BJ (cell line): ENCODE measurements at regions of chr1 and their contacts with region 1.

Region 1: GRCh38 chr1:169915150-169915549 is 21.5 kb upstream of the SCYL3 start:
- DNase-seq: no peak
- H3K4me3 ChIP-seq: no peak overlapping the region
- H3K27me3 ChIP-seq: no peaks in the 10 kb centered on the region
- CTCF ChIP-seq: no peak

Region 2: DNA sequence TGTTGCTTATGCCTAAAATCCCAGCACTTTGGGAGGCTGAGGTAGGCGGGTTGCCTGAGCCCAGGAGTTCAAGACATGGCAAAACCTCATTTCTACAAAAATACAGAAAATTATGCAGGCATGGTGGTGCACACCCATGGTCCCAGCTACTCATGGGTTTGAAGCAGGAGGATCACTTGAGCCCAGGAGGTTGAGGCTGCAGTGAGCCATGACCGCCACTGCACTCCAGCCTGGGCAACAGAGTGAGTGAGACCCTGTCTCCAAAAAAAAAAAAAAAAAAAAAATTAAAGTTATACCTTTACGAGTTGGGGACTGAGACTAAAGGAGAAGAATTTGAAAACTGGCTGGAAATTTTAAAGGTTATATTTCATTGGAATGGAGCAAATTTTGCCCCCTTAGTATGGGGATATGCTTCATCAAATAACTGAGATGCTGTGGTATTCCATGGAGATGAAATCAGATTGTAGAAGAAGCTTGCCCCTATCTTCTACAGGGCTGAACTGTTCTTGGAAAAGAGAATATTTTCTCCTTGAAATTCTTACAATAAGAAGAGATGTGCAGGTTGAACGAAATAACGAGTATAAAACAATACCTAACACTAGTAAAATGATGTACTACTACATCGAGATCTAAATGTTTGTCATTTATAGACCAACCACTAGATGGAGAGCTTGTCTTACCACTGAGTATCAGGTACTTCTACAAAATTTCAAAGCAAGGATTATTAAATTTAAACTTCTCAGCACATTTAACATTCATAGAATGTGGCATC is 13.5 kb after region 1 on chr1:
- CTCF ChIA-PET with region 1: interaction called, 10 read pairs
- POLR2A ChIA-PET with region 1: no interaction called
- DNase-seq: no peak
- H3K4me3 ChIP-seq: no peak overlapping the region
- H3K27me3 ChIP-seq: no peaks in the 10 kb centered on the region
- CTCF ChIP-seq: peak; percentile 63

Region 3: GRCh38 chr1:169974067-169974466 is 58.9 kb after region 1 on chr1:
- CTCF ChIA-PET with region 1: no interaction called
- POLR2A ChIA-PET with region 1: no interaction called
- DNase-seq: no peak
- H3K4me3 ChIP-seq: no peak overlapping the region
- H3K27me3 ChIP-seq: no peaks in the 10 kb centered on the region
- CTCF ChIP-seq: no peak